OCI-LY7 (cell line): ENCODE measurements at regions of chr9 and their contacts with region 1.

Region 1: DNA sequence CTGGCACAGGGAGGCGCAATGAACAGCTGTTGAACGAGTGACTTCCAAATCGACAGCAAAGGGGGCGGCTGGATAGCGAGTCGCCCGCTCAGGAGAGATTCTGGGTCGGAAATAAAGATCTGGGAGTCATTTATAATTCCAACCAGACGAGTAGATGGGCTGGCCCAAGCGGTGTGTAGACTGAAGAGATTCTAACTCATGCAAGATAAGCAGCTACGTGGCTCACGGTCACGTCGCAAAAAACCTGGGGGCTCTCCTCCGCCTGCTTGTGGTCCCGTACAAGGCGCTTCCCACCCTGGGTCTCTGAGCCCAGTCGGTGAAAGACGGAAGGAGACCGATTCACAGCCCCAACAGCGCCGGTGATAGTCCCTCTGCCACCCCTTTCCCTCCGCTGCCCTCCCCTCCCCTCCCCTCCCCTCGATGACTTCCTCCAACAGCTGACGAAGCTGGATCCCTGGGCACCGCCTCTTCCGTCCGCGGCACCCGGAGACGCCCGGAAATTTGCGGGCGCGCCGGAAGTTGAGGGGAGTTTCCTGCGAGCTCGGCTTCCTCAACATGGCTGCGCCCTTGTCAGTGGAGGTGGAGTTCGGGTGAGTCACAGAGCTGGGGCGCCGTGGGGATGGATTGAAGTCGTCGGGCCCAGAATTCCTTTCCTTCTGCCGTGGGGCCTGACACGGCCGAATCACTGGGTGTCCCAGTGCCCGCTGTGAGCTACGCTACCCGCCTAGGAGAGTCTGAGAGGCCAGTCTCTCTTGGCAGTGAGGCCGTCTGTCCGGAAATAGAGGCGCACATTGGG is at the start of gene URM1:
- DNase-seq: peak; percentile 95
- H3K4me3 ChIP-seq: peak within 1 kb of the TSS; percentile 87
- H3K27ac ChIP-seq: peak within 1 kb of the TSS; percentile 43
- H3K4me1 ChIP-seq: peaks cover 16% of the 10 kb centered on the region
- CTCF ChIP-seq: no peak; the same call in 1 of the 2 replicates
- total RNA-seq, gene URM1: 42.3 and 58.5 TPM in 2 replicates

Region 2: GRCh38 chr9:128322404-128323211 is 48.4 kb before region 1 on chr9 and contains the starts of genes COQ4 and TRUB2:
- CTCF ChIA-PET with region 1: no interaction called
- POLR2A ChIA-PET with region 1: no interaction called
- intact Hi-C with region 1: loop called (anchors 1 kb)
- DNase-seq: peak; percentile 95
- H3K4me3 ChIP-seq: peak within 1 kb of the TSS; percentile 81
- H3K27ac ChIP-seq: peak within 1 kb of the TSS; percentile 77
- H3K4me1 ChIP-seq: peaks cover 22% of the 10 kb centered on the region
- CTCF ChIP-seq: peak; percentile 31; the same call in 1 of the 2 replicates
- total RNA-seq, gene COQ4: 42.4 and 53.4 TPM in 2 replicates
- total RNA-seq, gene TRUB2: 29.7 and 31.3 TPM in 2 replicates

Region 3: DNA sequence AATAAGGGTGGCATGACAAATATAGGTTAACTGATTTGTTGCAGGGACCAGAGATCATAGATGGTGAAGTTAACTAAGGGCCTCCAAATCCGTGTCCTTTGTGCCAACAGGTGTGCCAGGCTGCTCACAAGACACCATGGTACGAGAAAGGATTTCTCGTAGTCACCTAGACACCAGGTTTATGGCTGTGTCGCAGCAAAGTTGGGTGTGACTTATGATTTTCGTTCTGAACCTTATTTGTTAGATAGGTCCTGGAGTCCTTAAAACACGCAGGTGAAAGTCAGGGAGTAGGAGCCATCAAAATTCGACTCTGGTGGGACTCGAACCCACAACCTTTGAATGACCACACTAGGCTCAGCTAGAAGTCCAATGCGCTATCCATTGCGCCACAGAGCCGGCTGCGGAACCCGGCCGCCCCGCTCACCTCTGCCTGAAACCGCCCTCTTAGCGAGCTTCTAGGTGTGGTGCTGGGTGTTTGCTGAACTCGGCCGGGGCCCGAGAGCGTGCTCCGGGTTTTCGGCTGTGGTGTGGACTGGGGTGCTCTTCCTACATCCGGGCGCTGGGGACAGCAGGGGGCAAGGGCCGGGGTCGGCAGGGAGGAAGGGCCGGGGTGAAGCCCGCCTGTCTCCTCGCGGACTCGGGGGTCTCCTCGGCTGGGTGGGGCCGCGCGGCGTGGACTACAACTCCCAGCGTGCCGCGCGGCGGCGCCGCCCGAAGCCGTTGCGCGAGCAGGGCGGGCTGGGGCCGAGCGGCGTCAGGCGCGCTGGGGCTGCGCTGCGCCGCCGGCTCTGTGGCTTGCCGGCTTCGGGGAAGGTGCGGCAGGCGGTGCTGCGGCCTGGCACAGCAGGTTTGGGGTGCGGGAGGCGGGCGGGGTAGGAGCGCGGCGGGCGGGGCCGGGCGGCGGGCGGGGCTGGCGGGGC is 31.0 kb before region 1 on chr9 and contains the start of gene SLC27A4:
- CTCF ChIA-PET with region 1: no interaction called
- POLR2A ChIA-PET with region 1: interaction called, 4 read pairs
- intact Hi-C with region 1: loop called (anchors 2 kb)
- DNase-seq: peak; percentile 88
- H3K4me3 ChIP-seq: peak within 1 kb of the TSS; percentile 82
- H3K27ac ChIP-seq: peak within 1 kb of the TSS; percentile 18
- H3K4me1 ChIP-seq: peaks cover 5% of the 10 kb centered on the region
- CTCF ChIP-seq: no peak
- total RNA-seq, gene SLC27A4: 12.3 and 14.2 TPM in 2 replicates

Region 4: GRCh38 chr9:128412120-128412790 is 41.2 kb after region 1 on chr9:
- CTCF ChIA-PET with region 1: interaction called, 3 read pairs
- POLR2A ChIA-PET with region 1: interaction called, 3 read pairs
- intact Hi-C with region 1: loop called (anchors 2 kb)
- DNase-seq: peak; percentile 67
- H3K4me3 ChIP-seq: no peak overlapping the region
- H3K27ac ChIP-seq: no peak overlapping the region
- H3K4me1 ChIP-seq: peaks cover 10% of the 10 kb centered on the region
- CTCF ChIP-seq: peak; percentile 85

Region 5: GRCh38 chr9:128455849-128456612 is 85.0 kb after region 1 on chr9 and contains the start of gene ODF2:
- CTCF ChIA-PET with region 1: no interaction called
- POLR2A ChIA-PET with region 1: no interaction called
- intact Hi-C with region 1: loop called (anchors 2 kb)
- DNase-seq: peak; percentile 98
- H3K4me3 ChIP-seq: peak within 1 kb of the TSS; percentile 76
- H3K27ac ChIP-seq: peak within 1 kb of the TSS; percentile 75
- H3K4me1 ChIP-seq: peaks cover 10% of the 10 kb centered on the region
- CTCF ChIP-seq: no peak
- total RNA-seq, gene ODF2: 84.4 and 94.3 TPM in 2 replicates